Natural killer cell (primary cell): ENCODE measurements at regions of chr16 and their contacts with region 1.

Region 1: DNA sequence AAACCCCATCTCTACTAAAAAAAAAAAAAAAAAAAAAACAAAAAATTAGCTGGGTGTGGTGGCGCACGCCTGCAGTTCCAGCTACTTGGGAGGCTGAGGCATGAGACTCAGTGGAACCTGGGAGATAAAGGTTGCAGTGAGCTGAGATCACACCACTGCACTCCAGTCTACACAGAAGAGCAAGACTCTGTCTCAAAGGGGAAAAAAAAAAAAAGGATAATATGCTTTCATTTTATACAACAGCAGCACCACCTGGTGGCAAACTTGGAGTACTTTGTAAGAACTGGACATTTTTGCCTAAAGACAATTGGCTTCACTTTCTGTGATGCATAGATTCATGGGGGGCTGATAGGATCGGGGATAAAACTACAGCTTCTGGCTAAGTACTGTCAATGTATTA is 8.5 kb downstream of the CHTF8 start:
- DNase-seq: peak; percentile 51 to 85
- ATAC-seq: peak; percentile 75 to 97 (median 85)
- H3K4me3 ChIP-seq: no peak overlapping the region
- H3K4me3 Mint-ChIP-seq: no peak overlapping the region
- H3K27ac ChIP-seq: no peak overlapping the region
- H3K27ac Mint-ChIP-seq: no peak overlapping the region
- H3K4me1 ChIP-seq: no peaks in the 10 kb centered on the region
- H3K4me1 Mint-ChIP-seq: peaks cover 10 to 22% of the 10 kb centered on the region in 2 donors
- H3K27me3 ChIP-seq: no peaks in the 10 kb centered on the region
- H3K27me3 Mint-ChIP-seq: no peaks in the 10 kb centered on the region
- CTCF ChIP-seq: peak; percentile 71

Region 2: GRCh38 chr16:68843482-68844210 is 280.3 kb before region 1 on chr16 and contains the start of gene TANGO6:
- intact Hi-C with region 1: loop called (anchors 2 kb)
- DNase-seq: peak; percentile 85 to 93
- ATAC-seq: peak; percentile 96 to 98 (median 96)
- H3K4me3 ChIP-seq: peak within 1 kb of the TSS; percentile 89
- H3K4me3 Mint-ChIP-seq: peak within 1 kb of the TSS; percentile 99
- H3K27ac ChIP-seq: peak within 1 kb of the TSS; percentile 70
- H3K27ac Mint-ChIP-seq: peak within 1 kb of the TSS; percentile 69 to 88
- H3K4me1 ChIP-seq: peaks cover 21% of the 10 kb centered on the region
- H3K4me1 Mint-ChIP-seq: peaks cover 27% of the 10 kb centered on the region in 2 donors
- H3K27me3 ChIP-seq: no peaks in the 10 kb centered on the region
- H3K27me3 Mint-ChIP-seq: no peaks in the 10 kb centered on the region
- CTCF ChIP-seq: no peak
- total RNA-seq, gene TANGO6: 21.2 to 27.3 (median 23.9) TPM